Activated T-helper 1 cell treated with anti-CD3 and anti-CD28 coated beads, Interleukin-12 subunit alpha, Interleukin-12 subunit beta, Interleukin-2, Interleukin-4 antibody, amounts not matched to agents 30 ng/mL and 10 ng/mL and 1 ng/mL, durations not matched to agents 14 hours and 24 hours and 36 hours (primary cell): ENCODE measurements at regions of chr7 and their contacts with region 1.

Region 1: GRCh38 chr7:48088559-48089045 is 463 bp upstream of the UPP1 start:
- DNase-seq: peak; percentile 87
- H3K4me3 Mint-ChIP-seq: peak overlapping the region; percentile 87
- H3K27ac Mint-ChIP-seq: peak overlapping the region; percentile 96
- H3K4me1 Mint-ChIP-seq: peaks cover 82% of the 10 kb centered on the region
- H3K27me3 Mint-ChIP-seq: no peaks in the 10 kb centered on the region

Region 2: GRCh38 chr7:47482013-47482875 is 606.4 kb before region 1 on chr7:
- intact Hi-C with region 1: loop called (anchors 5 kb)
- DNase-seq: no peak
- H3K4me3 Mint-ChIP-seq: peak overlapping the region; percentile 10
- H3K27ac Mint-ChIP-seq: peak overlapping the region; percentile 67
- H3K4me1 Mint-ChIP-seq: peaks cover 22% of the 10 kb centered on the region
- H3K27me3 Mint-ChIP-seq: no peaks in the 10 kb centered on the region

Region 3: GRCh38 chr7:47688311-47689100 is 400.1 kb before region 1 on chr7:
- intact Hi-C with region 1: no loop called
- DNase-seq: no peak
- H3K4me3 Mint-ChIP-seq: no peak overlapping the region
- H3K27ac Mint-ChIP-seq: no peak overlapping the region
- H3K4me1 Mint-ChIP-seq: no peaks in the 10 kb centered on the region
- H3K27me3 Mint-ChIP-seq: no peaks in the 10 kb centered on the region

Region 4: GRCh38 chr7:47873762-47874161 is 214.8 kb before region 1 on chr7:
- intact Hi-C with region 1: loop called (anchors 5 kb)
- DNase-seq: no peak
- H3K4me3 Mint-ChIP-seq: no peak overlapping the region
- H3K27ac Mint-ChIP-seq: no peak overlapping the region
- H3K4me1 Mint-ChIP-seq: peaks cover 6% of the 10 kb centered on the region
- H3K27me3 Mint-ChIP-seq: peaks cover 9% of the 10 kb centered on the region

Region 5: GRCh38 chr7:47979145-47979831 is 109.3 kb before region 1 on chr7 and contains the start of gene HUS1:
- intact Hi-C with region 1: loop called (anchors 1 kb)
- DNase-seq: peak; percentile 88
- H3K4me3 Mint-ChIP-seq: peak within 1 kb of the TSS; percentile 90
- H3K27ac Mint-ChIP-seq: peak within 1 kb of the TSS; percentile 96
- H3K4me1 Mint-ChIP-seq: peaks cover 24% of the 10 kb centered on the region
- H3K27me3 Mint-ChIP-seq: peaks cover 5% of the 10 kb centered on the region
- total RNA-seq, gene HUS1: 34.4 and 36.4 TPM in 2 replicates

Region 6: DNA sequence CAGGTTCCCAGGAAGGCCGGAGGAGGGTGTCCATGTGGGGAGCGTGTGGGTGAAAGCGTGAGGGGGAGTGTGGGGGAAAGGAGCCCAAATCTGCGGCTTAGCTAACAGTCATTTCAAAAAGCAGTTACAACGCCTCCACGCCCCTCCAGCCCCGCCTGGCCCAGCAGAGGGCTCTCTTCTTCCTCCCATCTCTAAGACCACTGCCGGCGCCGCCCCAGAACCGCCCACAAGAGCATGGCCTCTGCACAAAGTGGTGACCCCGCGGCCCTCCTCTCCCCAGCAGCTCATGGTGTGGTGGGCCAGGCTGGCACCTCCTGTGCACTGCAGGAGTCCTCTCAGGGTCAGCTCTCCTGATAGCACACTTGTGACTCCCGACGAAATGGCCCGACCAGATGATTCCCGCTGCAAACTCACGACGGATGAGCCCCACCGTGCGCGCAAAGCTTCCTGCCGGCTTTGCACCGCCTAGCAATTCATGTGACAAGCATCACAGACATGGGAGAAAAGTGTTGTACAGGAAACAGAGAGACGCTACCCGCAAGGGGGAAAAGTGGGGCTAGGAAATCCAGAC is 96.8 kb before region 1 on chr7:
- intact Hi-C with region 1: loop called (anchors 1 kb)
- DNase-seq: peak; percentile 80
- H3K4me3 Mint-ChIP-seq: peak overlapping the region; percentile 80
- H3K27ac Mint-ChIP-seq: peak overlapping the region; percentile 80
- H3K4me1 Mint-ChIP-seq: peaks cover 17% of the 10 kb centered on the region
- H3K27me3 Mint-ChIP-seq: peaks cover 6% of the 10 kb centered on the region

Region 7: GRCh38 chr7:48035301-48035966 is 53.2 kb before region 1 on chr7 and contains the start of gene C7orf57:
- intact Hi-C with region 1: loop called (anchors 1 kb)
- DNase-seq: peak; percentile 87
- H3K4me3 Mint-ChIP-seq: peak within 1 kb of the TSS; percentile 81
- H3K27ac Mint-ChIP-seq: peak within 1 kb of the TSS; percentile 72
- H3K4me1 Mint-ChIP-seq: peaks cover 11% of the 10 kb centered on the region
- H3K27me3 Mint-ChIP-seq: peaks cover 53% of the 10 kb centered on the region
- total RNA-seq, gene C7orf57: 0.10 and 0.31 TPM in 2 replicates

Region 8: GRCh38 chr7:48041653-48041970 is 47.0 kb before region 1 on chr7:
- intact Hi-C with region 1: loop called (anchors 1 kb)
- DNase-seq: no peak
- H3K4me3 Mint-ChIP-seq: no peak overlapping the region
- H3K27ac Mint-ChIP-seq: peak overlapping the region; percentile 36
- H3K4me1 Mint-ChIP-seq: peaks cover 48% of the 10 kb centered on the region
- H3K27me3 Mint-ChIP-seq: peaks cover 22% of the 10 kb centered on the region

Region 9: GRCh38 chr7:48209004-48209600 is 120.5 kb after region 1 on chr7:
- intact Hi-C with region 1: no loop called
- DNase-seq: no peak
- H3K4me3 Mint-ChIP-seq: no peak overlapping the region
- H3K27ac Mint-ChIP-seq: no peak overlapping the region
- H3K4me1 Mint-ChIP-seq: no peaks in the 10 kb centered on the region
- H3K27me3 Mint-ChIP-seq: peaks cover 8% of the 10 kb centered on the region